HEK293 (cell line): ENCODE measurements at regions of chr9 and their contacts with region 1.

Region 1: GRCh38 chr9:125904155-125904851 is 157.1 kb downstream of the PBX3 start:
- H3K4me3 ChIP-seq: no peak overlapping the region
- H3K27ac ChIP-seq: peak overlapping the region; percentile 37
- H3K4me1 ChIP-seq: peaks cover 27% of the 10 kb centered on the region
- CTCF ChIP-seq: no peak

Region 2: GRCh38 chr9:125586172-125586511 is 318.2 kb before region 1 on chr9:
- CTCF ChIA-PET with region 1: no interaction called
- POLR2A ChIA-PET with region 1: no interaction called
- H3K4me3 ChIP-seq: no peak overlapping the region
- H3K27ac ChIP-seq: no peak overlapping the region
- H3K4me1 ChIP-seq: no peaks in the 10 kb centered on the region
- CTCF ChIP-seq: no peak

Region 3: GRCh38 chr9:126379661-126380360 is 475.5 kb after region 1 on chr9:
- CTCF ChIA-PET with region 1: interaction called, 12 read pairs
- POLR2A ChIA-PET with region 1: interaction called, 4 read pairs
- H3K4me3 ChIP-seq: no peak overlapping the region
- H3K27ac ChIP-seq: no peak overlapping the region
- H3K4me1 ChIP-seq: peaks cover 7% of the 10 kb centered on the region
- CTCF ChIP-seq: no peak